HepG2 (cell line): ENCODE measurements at regions of chr2 and their contacts with region 1.

Region 1: DNA sequence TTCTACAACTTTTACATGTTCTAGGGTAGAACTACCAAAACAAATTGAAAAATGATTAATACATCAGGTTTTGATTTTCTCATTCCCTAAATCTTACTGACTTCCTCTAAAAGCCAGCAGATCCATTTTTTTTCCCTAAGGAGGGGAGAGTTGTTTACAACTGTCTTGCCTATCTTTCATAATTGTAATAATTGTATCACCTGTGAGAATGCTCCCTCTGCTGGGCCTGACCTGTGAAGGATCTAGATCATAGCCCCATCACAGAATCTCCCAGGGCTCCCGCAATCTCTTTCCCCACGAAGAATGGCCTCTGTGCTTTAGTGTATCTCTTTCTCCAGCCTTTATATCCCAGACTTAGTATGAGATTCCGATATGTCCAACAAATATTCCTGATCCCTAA is 9.1 kb downstream of the LOXL3 start:
- DNase-seq: no peak
- ATAC-seq: peak; percentile 18; the same call in 1 of the 3 replicates
- H3K4me3 ChIP-seq: no peak overlapping the region
- H3K27ac ChIP-seq: no peak overlapping the region
- H3K4me1 ChIP-seq: peaks cover 17% of the 10 kb centered on the region
- H3K27me3 ChIP-seq: peaks cover 0 to 23% of the 10 kb centered on the region in 2 experiments; a peak in 2 of 5 replicates
- CTCF ChIP-seq: peak; percentile 57
- EP300 ChIP-seq: no peak
- POLR2A ChIP-seq: no peak
- RAD21 ChIP-seq: no peak

Region 2: GRCh38 chr2:74587664-74588277 is 43.1 kb after region 1 on chr2:
- CTCF ChIA-PET with region 1: no interaction called
- POLR2A ChIA-PET with region 1: no interaction called
- in situ Hi-C with region 1: no loop called
- intact Hi-C with region 1: loop called (anchors 1 kb)
- DNase-seq: peak; percentile 77
- ATAC-seq: peak; percentile 96
- H3K4me3 ChIP-seq: no peak overlapping the region
- H3K27ac ChIP-seq: no peak overlapping the region
- H3K4me1 ChIP-seq: peaks cover 20% of the 10 kb centered on the region
- H3K27me3 ChIP-seq: peaks cover 0 to 4% of the 10 kb centered on the region in 2 experiments; a peak in 3 of 5 replicates
- CTCF ChIP-seq: peak; percentile 94
- EP300 ChIP-seq: no peak
- POLR2A ChIP-seq: no peak
- RAD21 ChIP-seq: peak; percentile 88

Region 3: DNA sequence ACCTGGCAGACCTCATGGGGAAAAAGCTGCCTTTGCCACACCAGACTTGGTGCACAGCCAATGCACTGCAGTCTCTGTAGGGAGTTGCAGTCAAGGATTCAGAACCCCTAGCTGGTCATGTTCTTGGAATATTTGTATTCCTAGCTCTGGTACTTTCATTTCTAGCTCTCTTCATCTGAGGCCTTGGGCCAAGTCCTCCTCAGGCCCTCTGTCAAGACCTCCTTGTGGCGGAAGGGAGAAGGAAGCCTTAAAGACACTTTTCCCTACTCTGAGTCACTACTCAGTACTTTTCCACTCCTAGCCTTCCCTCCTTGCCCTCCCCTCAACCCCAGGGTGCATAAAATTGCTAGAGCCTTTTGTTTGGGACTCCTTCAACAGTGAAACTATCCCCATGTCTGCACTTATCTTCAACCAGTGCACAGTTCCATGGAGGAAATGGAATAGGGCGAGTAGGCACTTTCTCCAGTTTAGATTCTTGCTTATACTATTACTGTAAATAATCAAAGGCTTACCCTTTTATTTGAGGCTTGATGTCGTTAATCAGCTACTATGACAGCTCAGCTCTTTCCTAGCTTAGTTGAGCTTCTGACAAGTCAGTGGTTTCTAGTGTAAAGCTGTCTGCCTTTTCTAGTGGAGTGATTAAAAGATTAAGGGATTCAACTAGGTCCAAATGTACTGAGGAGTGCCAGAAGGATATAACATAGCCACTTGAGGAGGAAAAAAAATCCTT is 87.7 kb after region 1 on chr2:
- CTCF ChIA-PET with region 1: no interaction called
- POLR2A ChIA-PET with region 1: no interaction called
- in situ Hi-C with region 1: no loop called
- intact Hi-C with region 1: no loop called
- DNase-seq: no peak
- ATAC-seq: no peak
- H3K4me3 ChIP-seq: no peak overlapping the region
- H3K27ac ChIP-seq: no peak overlapping the region
- H3K4me1 ChIP-seq: no peaks in the 10 kb centered on the region
- H3K27me3 ChIP-seq: 0 out of 5 replicates have a peak, but pooled peaks cover 0 to 2% of the 10 kb centered on the region in 2 experiments
- CTCF ChIP-seq: no peak
- EP300 ChIP-seq: no peak
- POLR2A ChIP-seq: no peak
- RAD21 ChIP-seq: no peak

Region 4: GRCh38 chr2:75570948-75571729 is 1026.5 kb after region 1 on chr2:
- CTCF ChIA-PET with region 1: no interaction called
- POLR2A ChIA-PET with region 1: no interaction called
- in situ Hi-C with region 1: no loop called
- intact Hi-C with region 1: no loop called
- DNase-seq: peak; percentile 96
- ATAC-seq: peak; percentile 94
- H3K4me3 ChIP-seq: peak overlapping the region; percentile 39 to 54 (median 46)
- H3K27ac ChIP-seq: peak overlapping the region; percentile 95
- H3K4me1 ChIP-seq: peaks cover 75% of the 10 kb centered on the region
- H3K27me3 ChIP-seq: no peaks in the 10 kb centered on the region
- CTCF ChIP-seq: no peak
- EP300 ChIP-seq: peak in 1 of 2 experiments; percentile 95; a peak in 2 of 4 replicates
- POLR2A ChIP-seq: peak; percentile 49 to 82; a peak in 3 of 4 replicates
- RAD21 ChIP-seq: no peak; the same call in 1 of the 2 replicates